GM10248 (cell line): ENCODE measurements at regions of chr6 and their contacts with region 1.

Region 1: GRCh38 chr6:90478789-90479602 is 107.9 kb downstream of the MAP3K7 start:
- DNase-seq: peak; percentile 61
- CTCF ChIP-seq: peak; percentile 73

Region 2: DNA sequence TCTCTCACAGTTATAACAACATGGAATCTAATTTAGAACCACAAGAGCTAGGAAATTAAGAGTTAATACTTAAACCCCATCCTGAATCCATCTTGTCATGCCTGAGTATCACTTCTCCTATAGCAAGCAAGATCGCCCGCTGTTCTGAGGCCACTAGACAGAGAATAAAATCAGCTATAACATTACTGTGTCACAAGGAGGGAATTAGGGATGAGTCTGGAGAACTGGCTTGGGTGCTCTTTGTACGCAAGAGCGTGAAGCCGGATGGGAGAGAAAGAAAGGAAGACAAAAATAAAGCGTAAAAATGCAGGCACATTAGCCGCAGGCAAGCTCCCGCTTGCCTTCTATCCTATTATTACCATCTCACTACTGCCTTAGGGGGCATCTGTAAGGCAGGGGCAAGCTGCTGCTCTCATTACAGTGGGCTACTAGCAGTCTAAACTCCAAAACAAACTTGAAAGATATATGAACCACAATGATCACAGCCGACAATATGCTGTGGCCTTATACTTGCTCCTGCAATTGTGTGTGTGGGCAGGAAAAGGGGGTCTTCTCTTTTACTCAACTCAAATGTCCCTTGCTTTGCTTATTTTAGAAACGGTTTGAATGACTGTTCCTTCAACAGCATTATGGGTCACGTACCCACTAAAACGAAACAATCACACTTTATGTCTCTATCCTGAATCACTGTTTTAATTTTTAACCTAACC is 502.9 kb before region 1 on chr6:
- CTCF ChIA-PET with region 1: interaction called, 14 read pairs
- POLR2A ChIA-PET with region 1: no interaction called
- DNase-seq: no peak
- CTCF ChIP-seq: no peak

Region 3: DNA sequence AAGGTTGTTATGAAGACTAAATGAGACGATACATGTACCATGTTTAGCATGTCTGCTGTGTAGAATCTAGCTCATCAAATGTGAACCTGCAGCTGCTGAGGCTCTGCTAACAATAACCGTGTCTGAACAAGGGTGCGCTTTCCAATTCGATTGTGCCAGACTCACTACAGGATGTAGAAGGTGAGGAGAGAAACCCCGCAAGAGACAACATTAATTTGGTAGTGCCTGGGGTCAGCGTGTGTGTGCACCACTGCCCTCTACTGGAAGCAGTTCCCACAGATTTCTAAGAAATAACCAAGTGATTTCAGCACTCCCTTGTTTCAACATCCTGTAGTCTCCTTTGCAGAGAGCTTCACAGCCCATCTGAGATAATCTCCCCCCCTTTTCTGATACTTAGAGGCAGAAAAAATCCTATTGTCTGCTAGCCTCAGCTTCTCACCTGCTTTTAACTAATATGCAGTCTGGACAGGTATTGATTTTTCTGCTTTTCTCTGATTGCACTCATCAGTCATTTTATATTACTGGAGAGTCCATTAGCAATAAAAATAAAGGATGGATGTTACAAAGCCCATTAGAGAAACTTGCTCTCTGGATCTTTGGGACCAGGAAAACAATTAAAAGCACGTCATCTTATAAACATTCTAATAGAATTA is 85.6 kb before region 1 on chr6:
- CTCF ChIA-PET with region 1: interaction called, 10 read pairs
- POLR2A ChIA-PET with region 1: no interaction called
- DNase-seq: peak; percentile 46
- CTCF ChIP-seq: peak; percentile 61

Region 4: DNA sequence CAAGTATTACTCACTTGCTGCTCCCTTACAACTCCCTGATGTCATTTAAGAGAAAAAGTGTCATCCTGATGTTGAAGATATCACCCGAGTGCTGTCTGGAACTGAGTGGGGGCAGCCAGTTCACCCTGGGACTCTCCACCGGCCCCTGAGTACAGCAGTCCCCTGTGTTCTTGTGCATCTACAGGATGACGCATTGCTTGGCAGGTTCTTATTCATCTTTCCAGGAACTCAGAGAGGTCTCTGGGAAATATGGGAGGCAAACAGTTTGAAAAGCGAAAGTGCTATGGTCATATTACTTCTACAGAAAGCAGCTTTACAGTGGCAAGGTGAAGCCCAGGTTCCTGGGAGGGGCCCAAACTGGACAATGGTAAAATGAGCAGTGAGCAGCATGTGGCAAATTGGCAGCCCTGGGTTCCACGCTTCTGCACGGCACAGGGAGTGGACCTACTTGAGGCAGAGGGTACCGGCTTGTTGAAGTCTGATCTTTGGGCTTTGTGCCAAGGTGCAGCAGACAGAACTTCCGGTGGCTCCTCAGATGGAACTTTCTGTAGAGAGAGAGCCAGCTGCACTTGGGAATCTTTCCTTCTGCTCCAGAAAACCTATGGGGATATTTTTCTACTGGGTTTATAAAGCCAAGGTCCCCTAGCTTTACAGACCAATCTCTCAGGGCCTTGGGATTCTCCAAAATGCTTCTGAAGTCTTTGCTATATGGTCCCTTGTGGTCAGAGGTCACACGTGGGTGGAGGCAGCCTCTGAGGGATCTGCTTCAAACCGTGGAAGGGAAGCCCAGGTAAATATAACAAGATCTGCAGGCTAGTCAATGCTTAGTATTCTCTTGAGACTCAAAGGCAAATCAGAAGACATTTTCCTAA is 20.4 kb before region 1 on chr6:
- CTCF ChIA-PET with region 1: interaction called, 17 read pairs
- POLR2A ChIA-PET with region 1: no interaction called
- DNase-seq: no peak
- CTCF ChIP-seq: no peak

Region 5: DNA sequence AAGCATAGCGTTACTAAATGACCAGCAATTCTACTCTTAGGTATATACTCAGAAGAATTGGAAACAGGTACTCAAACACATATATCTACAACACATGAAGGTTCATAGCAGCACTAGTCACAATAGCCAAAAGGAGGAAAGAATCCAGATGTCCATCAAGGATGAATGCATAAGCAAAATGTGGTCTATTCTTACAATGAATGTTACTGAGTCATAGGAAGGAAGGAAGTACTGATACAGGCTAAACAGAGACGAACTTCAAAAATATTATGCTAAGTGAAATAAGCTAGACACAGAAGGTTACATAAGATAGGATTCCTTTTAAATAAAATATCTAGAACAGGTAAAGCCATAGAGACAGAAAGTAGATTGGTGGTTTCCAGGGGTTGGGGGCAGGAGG is 14.3 kb after region 1 on chr6:
- CTCF ChIA-PET with region 1: interaction called, 16 read pairs
- POLR2A ChIA-PET with region 1: no interaction called
- DNase-seq: no peak
- CTCF ChIP-seq: no peak

Region 6: DNA sequence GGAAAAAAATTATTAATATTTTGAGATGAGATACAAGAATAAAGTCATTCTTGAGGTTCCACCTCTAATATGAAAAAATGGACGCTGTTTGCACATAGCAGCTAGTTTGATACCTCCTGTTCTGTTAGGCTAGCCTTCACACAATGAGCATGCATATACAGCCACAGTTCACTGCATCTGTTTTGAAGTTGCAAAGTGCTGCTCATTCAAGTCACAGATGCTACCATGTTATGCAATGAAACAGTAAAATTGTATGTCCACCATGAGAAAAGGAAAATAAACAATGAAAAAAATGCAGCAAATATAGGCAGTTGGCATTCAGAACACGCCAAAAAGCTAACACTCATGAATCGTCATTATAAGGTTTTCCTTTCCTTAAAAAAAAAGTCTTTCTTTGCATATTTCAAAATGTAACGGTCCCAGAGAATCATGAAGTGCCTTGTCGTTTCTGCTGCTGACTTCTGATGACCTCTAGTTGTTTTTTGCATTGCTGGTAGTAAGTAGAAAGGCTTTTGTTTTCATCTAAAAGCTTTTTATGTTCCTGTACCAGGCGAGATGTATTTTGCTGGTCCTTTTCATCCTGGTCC is 37.2 kb after region 1 on chr6:
- CTCF ChIA-PET with region 1: no interaction called
- POLR2A ChIA-PET with region 1: no interaction called
- DNase-seq: no peak
- CTCF ChIP-seq: no peak